Activated CD8-positive, alpha-beta T cell treated with anti-CD3 and anti-CD28 coated beads, Interleukin-2, amount 10 ng/mL, durations not matched to agents 7 days and 5 days (primary cell): ENCODE measurements at regions of chr17 and their contacts with region 1.

Region 1: DNA sequence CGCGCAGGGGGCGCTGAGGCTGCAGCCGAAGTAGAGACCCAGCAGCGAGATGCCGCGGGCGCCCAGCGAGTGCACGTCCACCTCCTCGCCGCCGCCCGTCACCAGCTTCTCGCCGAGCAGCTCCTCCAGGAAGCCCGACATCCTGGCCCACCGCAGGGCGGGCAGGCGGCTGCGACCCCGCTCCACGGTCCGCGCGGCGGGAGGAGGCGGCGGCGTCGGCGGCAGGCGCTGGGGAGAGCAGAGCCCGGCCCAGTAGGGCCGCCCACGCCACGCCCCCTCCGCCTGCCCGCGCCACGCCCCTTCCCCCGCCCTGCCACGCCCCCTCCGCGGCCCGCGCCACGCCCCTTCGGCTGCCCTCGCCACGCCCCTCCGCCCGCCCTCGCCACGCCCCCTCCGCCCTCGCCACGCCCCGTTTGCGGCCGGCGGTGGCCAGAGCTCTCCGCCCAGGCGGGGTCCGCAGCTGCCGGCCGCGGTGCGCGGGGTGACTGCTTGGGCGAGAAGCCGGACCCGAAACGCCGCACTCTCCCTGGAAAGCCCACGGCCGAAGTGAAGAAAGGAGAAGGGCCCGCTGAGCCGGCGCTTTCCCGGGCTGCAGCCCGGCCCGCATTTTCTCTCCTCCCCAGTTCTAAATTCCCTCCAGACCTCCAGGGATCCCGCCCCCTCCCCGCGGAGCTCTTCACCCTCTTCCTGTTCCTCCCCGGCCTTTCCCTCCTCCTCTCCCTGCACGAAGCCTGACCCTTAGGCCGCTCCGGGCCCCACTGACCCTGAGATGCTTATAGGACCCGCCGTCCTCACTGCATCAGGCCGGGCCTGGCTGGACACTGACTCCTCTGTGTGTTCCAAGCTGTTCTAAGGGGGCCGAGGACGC is at the start of gene NXN:
- DNase-seq: peak; percentile 90
- ATAC-seq: peak; percentile 89
- H3K4me3 Mint-ChIP-seq: peak within 1 kb of the TSS; percentile 69
- H3K27ac Mint-ChIP-seq: no peak within 1 kb of the TSS
- H3K4me1 Mint-ChIP-seq: peaks cover 16% of the 10 kb centered on the region
- H3K27me3 Mint-ChIP-seq: peaks cover 31% of the 10 kb centered on the region
- total RNA-seq, gene NXN: 0.68 to 0.97 TPM

Region 2: GRCh38 chr17:752002-752619 is 227.7 kb before region 1 on chr17 and contains the start of gene GEMIN4:
- CTCF ChIA-PET with region 1: interaction called, 10 read pairs
- POLR2A ChIA-PET with region 1: no interaction called
- DNase-seq: peak; percentile 97
- ATAC-seq: peak; percentile 88
- H3K4me3 Mint-ChIP-seq: peak within 1 kb of the TSS; percentile 95
- H3K27ac Mint-ChIP-seq: peak within 1 kb of the TSS; percentile 96
- H3K4me1 Mint-ChIP-seq: peaks cover 31% of the 10 kb centered on the region
- H3K27me3 Mint-ChIP-seq: no peaks in the 10 kb centered on the region
- total RNA-seq, gene GEMIN4: 41.4 to 45.8 TPM

Region 3: DNA sequence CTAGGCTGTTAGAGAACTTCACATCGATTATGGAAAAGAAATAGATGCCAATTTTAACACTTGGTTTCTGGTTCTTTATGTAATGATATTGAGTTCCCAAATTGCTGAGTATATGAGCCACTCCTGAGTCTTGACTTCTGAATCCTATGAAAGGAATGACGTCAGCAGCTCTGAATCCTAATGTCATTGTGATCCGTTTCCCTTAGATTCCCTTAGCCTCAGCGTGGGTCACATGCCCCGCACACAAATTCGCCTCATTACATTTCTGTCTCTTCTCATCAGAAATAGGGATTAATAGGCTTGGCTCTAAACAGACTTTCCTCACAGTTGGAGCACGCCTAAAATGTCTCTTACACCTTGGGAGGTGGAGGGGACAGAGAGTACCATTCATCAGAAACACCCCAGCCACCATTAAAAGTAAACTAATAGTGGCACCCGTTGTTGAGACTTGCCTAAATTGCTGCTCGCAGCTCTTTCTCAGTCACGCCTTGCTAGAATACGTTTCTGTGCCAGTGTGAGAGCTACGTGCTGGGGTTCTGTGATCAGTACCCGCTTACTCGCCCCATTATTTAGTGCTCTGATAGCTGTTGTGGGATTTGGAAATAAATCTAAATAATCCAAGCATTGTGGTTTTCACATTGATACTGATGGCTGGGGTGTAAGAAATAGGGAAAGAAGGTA is 190.5 kb before region 1 on chr17:
- CTCF ChIA-PET with region 1: interaction called, 90 read pairs
- POLR2A ChIA-PET with region 1: no interaction called
- DNase-seq: no peak
- ATAC-seq: no peak
- H3K4me3 Mint-ChIP-seq: no peak overlapping the region
- H3K27ac Mint-ChIP-seq: no peak overlapping the region
- H3K4me1 Mint-ChIP-seq: peaks cover 6% of the 10 kb centered on the region
- H3K27me3 Mint-ChIP-seq: no peaks in the 10 kb centered on the region

Region 4: GRCh38 chr17:879549-880442 is 100.0 kb before region 1 on chr17:
- CTCF ChIA-PET with region 1: interaction called, 62 read pairs
- POLR2A ChIA-PET with region 1: no interaction called
- DNase-seq: peak; percentile 79
- ATAC-seq: peak; percentile 55
- H3K4me3 Mint-ChIP-seq: no peak overlapping the region
- H3K27ac Mint-ChIP-seq: no peak overlapping the region
- H3K4me1 Mint-ChIP-seq: peaks cover 22% of the 10 kb centered on the region
- H3K27me3 Mint-ChIP-seq: peaks cover 21% of the 10 kb centered on the region

Region 5: GRCh38 chr17:1147661-1148060 is 167.9 kb after region 1 on chr17:
- CTCF ChIA-PET with region 1: no interaction called
- POLR2A ChIA-PET with region 1: no interaction called
- DNase-seq: no peak
- ATAC-seq: no peak
- H3K4me3 Mint-ChIP-seq: no peak overlapping the region
- H3K27ac Mint-ChIP-seq: no peak overlapping the region
- H3K4me1 Mint-ChIP-seq: no peaks in the 10 kb centered on the region
- H3K27me3 Mint-ChIP-seq: no peaks in the 10 kb centered on the region